Calu3 (cell line): ENCODE measurements at regions of chr2 and their contacts with region 1.

Region 1: DNA sequence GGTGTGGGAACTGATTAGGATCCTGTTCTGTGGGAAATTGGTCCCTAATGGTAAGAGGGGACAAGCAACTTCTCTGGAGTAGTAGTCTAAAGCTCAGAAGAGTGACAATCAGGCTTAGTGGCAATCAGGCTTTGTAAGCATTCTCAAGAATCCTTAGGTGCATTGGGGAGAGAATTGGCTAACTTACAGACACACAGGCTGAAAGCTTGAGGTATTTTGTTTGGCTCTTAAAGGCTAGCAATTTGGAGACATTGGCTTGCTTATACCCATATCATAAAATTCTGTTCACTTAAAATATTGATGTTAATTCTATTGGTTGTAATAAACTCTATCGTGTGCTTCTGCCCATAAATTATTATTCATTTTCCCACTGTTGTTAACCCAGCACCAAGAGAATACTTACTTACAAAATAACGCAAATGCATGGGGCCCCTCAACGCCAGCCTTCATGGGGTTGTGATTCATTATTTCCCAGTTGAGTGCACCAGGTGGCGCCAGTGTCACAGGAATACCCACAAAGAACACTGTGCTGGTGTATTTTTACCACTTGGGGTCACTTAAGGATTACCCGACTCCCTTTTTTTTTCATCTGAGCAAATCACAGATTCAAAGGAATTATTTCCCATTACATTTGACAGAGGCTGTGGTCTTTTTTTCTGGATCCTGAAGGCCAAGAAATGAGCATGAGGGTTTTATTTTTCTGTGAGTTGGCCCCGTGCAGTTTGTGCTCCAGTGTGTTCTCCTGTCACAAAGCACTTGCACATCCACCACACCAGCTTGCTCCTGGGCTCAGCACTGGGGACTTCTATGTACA is 45.5 kb downstream of the DDX1 start:
- DNase-seq: peak; percentile 61
- H3K4me3 Mint-ChIP-seq: no peak overlapping the region
- H3K27ac Mint-ChIP-seq: no peak overlapping the region
- H3K4me1 Mint-ChIP-seq: no peaks in the 10 kb centered on the region
- H3K27me3 Mint-ChIP-seq: no peaks in the 10 kb centered on the region
- CTCF ChIP-seq: peak; percentile 78

Region 2: GRCh38 chr2:16281451-16282336 is 644.5 kb after region 1 on chr2:
- CTCF ChIA-PET with region 1: no interaction called
- intact Hi-C with region 1: loop called (anchors 5 kb)
- DNase-seq: peak; percentile 57
- H3K4me3 Mint-ChIP-seq: no peak overlapping the region
- H3K27ac Mint-ChIP-seq: no peak overlapping the region
- H3K4me1 Mint-ChIP-seq: no peaks in the 10 kb centered on the region
- H3K27me3 Mint-ChIP-seq: peaks cover 24% of the 10 kb centered on the region
- CTCF ChIP-seq: peak; percentile 51

Region 3: DNA sequence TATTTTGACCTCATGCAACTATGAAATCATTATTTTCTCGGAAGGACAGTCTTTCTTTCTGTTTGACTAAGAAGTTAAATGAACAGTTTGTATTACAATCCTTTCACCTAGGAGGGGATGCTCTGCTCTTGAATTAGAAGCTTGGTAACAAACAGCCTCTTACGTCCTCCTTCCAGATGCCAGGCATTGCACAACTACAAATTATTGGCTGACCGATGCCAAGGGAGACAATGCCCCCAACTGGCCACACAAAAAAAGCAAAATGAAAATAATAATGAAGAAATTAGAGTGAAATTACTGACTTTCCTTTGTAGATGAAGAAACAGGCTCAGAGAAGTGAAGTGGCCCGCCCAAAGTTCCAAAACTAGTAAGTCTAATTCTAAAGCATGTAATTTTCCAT is 850.5 kb after region 1 on chr2:
- CTCF ChIA-PET with region 1: no interaction called
- intact Hi-C with region 1: loop called (anchors 2 kb)
- DNase-seq: peak; percentile 36
- H3K4me3 Mint-ChIP-seq: no peak overlapping the region
- H3K27ac Mint-ChIP-seq: no peak overlapping the region
- H3K4me1 Mint-ChIP-seq: no peaks in the 10 kb centered on the region
- H3K27me3 Mint-ChIP-seq: peaks cover 17% of the 10 kb centered on the region
- CTCF ChIP-seq: peak; percentile 28

Region 4: GRCh38 chr2:16507655-16508489 is 870.7 kb after region 1 on chr2:
- CTCF ChIA-PET with region 1: no interaction called
- intact Hi-C with region 1: loop called (anchors 1 kb)
- DNase-seq: peak; percentile 68
- H3K4me3 Mint-ChIP-seq: peak overlapping the region; percentile 58
- H3K27ac Mint-ChIP-seq: no peak overlapping the region
- H3K4me1 Mint-ChIP-seq: no peaks in the 10 kb centered on the region
- H3K27me3 Mint-ChIP-seq: peaks cover 55% of the 10 kb centered on the region
- CTCF ChIP-seq: peak; percentile 49

Region 5: GRCh38 chr2:16608661-16609643 is 971.8 kb after region 1 on chr2:
- CTCF ChIA-PET with region 1: no interaction called
- intact Hi-C with region 1: loop called (anchors 2 kb)
- DNase-seq: peak; percentile 90
- H3K4me3 Mint-ChIP-seq: peak overlapping the region; percentile 58
- H3K27ac Mint-ChIP-seq: no peak overlapping the region
- H3K4me1 Mint-ChIP-seq: peaks cover 2% of the 10 kb centered on the region
- H3K27me3 Mint-ChIP-seq: peaks cover 44% of the 10 kb centered on the region
- CTCF ChIP-seq: peak; percentile 94